H1 (cell line): ENCODE measurements at regions of chr6 and their contacts with region 1.

Region 1: DNA sequence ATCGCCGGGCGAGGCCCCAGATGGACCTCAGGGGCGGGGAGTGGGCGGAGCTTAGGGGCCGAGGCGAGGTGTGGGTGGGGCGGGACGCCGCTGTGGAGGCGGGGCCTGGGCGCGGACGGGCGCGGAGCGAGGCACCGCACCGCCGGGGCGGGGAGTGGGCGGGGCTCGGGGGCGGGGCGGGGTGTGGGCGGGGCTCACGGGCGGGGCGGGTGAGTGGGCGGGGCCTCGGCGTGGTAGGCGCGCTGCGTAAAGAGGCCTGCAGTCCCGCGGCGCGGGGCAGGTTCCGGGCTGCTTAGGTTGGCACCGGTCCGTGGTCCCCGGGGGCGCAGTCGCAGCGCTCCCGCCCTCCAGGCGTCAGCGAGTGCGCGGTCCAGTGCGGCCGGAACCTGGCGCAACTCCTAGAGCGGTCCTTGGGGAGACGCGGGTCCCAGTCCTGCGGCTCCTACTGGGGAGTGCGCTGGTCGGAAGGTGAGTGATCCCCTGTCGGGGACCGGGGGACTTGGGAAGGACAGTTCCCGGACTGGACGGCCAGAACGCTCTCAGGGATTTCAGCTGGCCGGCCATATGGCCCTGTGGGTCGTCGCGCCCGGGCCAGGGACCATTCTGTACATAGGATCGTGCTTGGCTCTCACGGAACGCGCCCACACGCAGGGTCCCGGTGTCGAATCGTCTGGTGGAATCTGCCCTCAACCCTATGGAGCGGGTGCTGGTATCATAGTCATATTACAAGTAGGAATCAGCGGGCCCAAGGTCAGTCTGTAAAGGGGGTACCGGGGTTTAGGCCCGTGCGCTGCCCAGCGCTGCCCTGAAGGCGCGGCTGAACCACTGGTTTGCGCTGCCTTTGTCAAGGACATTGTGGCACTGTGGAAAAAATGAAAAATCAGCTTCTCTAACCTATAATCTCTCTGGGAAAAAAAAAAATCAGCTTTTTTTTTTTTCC is at the start of gene NQO2:
- DNase-seq: peak in 1 of 2 experiments; percentile 96
- H3K4me3 ChIP-seq: peak within 1 kb of the TSS; percentile 75 to 91 (median 88)
- H3K27ac ChIP-seq: 0 out of 2 replicates have a peak within 1 kb of the TSS, but pooled peaks have one; percentile 51
- H3K4me1 ChIP-seq: peaks cover 0 to 9% (median 1%) of the 10 kb centered on the region in 4 experiments; a peak in 4 of 7 replicates
- H3K27me3 ChIP-seq: no peaks in the 10 kb centered on the region
- CTCF ChIP-seq: no peak
- EP300 ChIP-seq: no peak
- POLR2A ChIP-seq: peak; percentile 70 to 91
- RAD21 ChIP-seq: no peak
- total RNA-seq, gene NQO2: 126 and 135 TPM in 2 replicates

Region 2: GRCh38 chr6:2921520-2922115 is 78.3 kb before region 1 on chr6:
- CTCF ChIA-PET with region 1: no interaction called
- POLR2A ChIA-PET with region 1: no interaction called
- DNase-seq: peak in 1 of 2 experiments; percentile 37
- H3K4me3 ChIP-seq: no peak overlapping the region
- H3K27ac ChIP-seq: no peak overlapping the region
- H3K4me1 ChIP-seq: peaks cover 7 to 38% (median 25%) of the 10 kb centered on the region in 4 experiments
- H3K27me3 ChIP-seq: no peaks in the 10 kb centered on the region
- CTCF ChIP-seq: no peak
- EP300 ChIP-seq: no peak
- POLR2A ChIP-seq: no peak
- RAD21 ChIP-seq: no peak

Region 3: DNA sequence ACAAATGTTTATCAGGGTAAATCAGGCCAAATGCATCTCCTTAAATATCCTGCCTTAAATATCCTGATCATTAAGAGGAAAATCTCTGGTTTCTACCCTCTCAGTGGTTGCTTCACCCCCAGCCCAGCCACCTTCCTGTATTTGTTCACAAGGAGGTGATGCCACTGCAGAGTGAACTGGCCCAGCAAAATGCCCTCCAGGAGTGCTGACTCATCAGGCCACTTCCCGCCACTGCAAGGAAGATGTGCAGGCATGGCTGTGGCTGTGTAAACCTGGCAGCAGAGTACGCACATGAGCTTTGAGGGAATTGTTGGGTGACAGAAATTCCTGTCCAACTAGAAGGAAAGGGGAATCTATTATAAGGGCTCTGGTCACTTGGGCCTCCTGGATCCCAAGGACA is 13.6 kb after region 1 on chr6:
- CTCF ChIA-PET with region 1: interaction called, 6 read pairs
- POLR2A ChIA-PET with region 1: interaction called, 33 read pairs
- DNase-seq: no peak
- H3K4me3 ChIP-seq: no peak overlapping the region
- H3K27ac ChIP-seq: no peak overlapping the region
- H3K4me1 ChIP-seq: peaks cover 0 to 5% (median 4%) of the 10 kb centered on the region in 4 experiments; a peak in 3 of 7 replicates
- H3K27me3 ChIP-seq: no peaks in the 10 kb centered on the region
- CTCF ChIP-seq: no peak
- EP300 ChIP-seq: no peak
- POLR2A ChIP-seq: no peak
- RAD21 ChIP-seq: no peak

Region 4: DNA sequence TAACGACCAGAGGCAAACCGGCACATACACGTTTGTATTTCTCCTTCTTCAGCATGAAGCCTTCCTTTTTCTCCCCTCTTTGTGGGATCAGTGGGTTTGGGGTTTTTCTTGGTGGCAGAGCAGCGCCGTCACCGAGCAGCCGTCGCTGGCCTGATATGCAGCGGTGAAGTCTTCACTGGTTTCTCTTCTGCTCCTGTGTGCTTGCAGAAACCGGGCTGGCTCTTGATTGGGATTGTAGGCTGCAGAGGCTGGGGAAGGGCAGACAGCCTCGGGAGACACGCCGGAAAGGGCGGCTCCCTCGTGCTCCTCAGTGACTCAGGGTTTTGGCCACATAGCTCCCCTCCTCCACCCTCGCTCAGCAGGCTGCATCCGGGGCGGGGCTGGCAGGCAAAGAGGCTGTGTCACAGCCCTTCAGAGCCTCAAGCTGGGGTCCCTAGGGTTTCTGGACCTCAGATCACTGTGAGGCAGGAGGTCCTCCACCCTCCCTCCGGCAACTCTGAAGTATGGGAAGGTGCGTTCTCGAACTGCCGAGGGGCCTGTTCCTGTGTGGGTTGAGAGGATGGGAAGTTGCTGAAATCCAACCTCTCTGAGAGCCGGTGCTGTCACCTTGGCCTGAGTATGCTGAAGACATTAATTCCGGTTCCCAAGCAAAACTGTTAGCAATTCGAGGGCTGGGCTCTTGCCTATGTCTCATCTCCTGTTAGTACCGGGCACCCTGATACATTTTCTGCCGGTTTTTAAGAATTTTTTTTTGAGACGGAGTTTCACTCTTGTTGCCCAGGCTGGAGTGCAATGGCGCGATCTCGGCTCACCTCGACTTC is 24.0 kb after region 1 on chr6:
- CTCF ChIA-PET with region 1: interaction called, 13 read pairs
- POLR2A ChIA-PET with region 1: interaction called, 33 read pairs
- DNase-seq: peak; percentile 75 to 86
- H3K4me3 ChIP-seq: peak overlapping the region in 2 of 4 experiments; percentile 5 to 9; a peak in 1 of 8 replicates
- H3K27ac ChIP-seq: peak overlapping the region; percentile 29; the same call in 1 of the 2 replicates
- H3K4me1 ChIP-seq: peaks cover 6 to 17% (median 11%) of the 10 kb centered on the region in 4 experiments
- H3K27me3 ChIP-seq: no peaks in the 10 kb centered on the region
- CTCF ChIP-seq: no peak
- EP300 ChIP-seq: peak in 1 of 2 experiments; percentile 80; a peak in 1 of 3 replicates
- POLR2A ChIP-seq: no peak
- RAD21 ChIP-seq: no peak

Region 5: DNA sequence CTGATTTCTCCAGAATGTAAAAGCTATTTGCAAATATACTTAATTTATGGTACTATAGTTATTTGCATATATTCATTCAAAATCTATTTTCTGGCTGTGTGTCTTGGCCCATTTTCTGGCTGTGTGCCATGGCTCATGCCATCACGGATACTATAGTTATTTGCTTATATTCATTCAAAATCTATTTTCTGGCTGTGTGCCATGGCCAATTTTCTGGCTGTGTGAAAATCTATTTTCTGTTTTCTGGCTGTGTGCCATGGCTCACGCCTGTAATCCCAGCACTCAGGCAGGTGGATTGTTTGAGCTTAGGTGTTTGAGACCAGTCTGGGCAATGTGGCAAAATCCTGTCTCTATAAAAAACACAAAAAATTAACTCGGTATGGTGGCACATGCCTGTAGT is 39.5 kb after region 1 on chr6:
- CTCF ChIA-PET with region 1: interaction called, 20 read pairs
- POLR2A ChIA-PET with region 1: interaction called, 4 read pairs
- DNase-seq: no peak
- H3K4me3 ChIP-seq: no peak overlapping the region
- H3K27ac ChIP-seq: no peak overlapping the region
- H3K4me1 ChIP-seq: peaks cover 0 to 5% (median 1%) of the 10 kb centered on the region in 4 experiments; a peak in 1 of 7 replicates
- H3K27me3 ChIP-seq: no peaks in the 10 kb centered on the region
- CTCF ChIP-seq: no peak
- EP300 ChIP-seq: no peak
- POLR2A ChIP-seq: no peak
- RAD21 ChIP-seq: no peak

Region 6: DNA sequence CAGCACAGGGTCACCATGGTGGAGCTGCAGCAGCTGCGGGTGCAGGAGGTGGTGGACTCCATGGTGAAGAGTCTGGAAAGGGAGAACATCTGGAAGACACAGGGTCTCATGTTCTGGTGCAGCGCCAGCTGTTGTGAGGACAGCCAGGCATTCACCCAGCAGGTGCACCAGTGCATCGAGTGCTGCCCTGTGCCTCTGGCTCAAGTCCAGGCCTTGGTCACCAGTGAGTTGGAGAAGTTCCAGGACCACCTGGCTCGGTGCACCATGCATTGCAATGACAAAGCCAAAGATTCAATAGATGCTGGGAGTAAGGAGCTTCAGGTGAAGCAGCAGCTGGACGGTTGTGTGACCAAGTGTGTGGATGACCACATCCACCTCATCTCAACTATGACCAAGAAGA is 45.5 kb after region 1 on chr6:
- CTCF ChIA-PET with region 1: interaction called, 20 read pairs
- POLR2A ChIA-PET with region 1: interaction called, 5 read pairs
- DNase-seq: no peak
- H3K4me3 ChIP-seq: no peak overlapping the region
- H3K27ac ChIP-seq: no peak overlapping the region
- H3K4me1 ChIP-seq: peaks cover 0 to 5% (median 1%) of the 10 kb centered on the region in 4 experiments; a peak in 1 of 7 replicates
- H3K27me3 ChIP-seq: no peaks in the 10 kb centered on the region
- CTCF ChIP-seq: no peak
- EP300 ChIP-seq: no peak
- POLR2A ChIP-seq: no peak
- RAD21 ChIP-seq: no peak

Region 7: DNA sequence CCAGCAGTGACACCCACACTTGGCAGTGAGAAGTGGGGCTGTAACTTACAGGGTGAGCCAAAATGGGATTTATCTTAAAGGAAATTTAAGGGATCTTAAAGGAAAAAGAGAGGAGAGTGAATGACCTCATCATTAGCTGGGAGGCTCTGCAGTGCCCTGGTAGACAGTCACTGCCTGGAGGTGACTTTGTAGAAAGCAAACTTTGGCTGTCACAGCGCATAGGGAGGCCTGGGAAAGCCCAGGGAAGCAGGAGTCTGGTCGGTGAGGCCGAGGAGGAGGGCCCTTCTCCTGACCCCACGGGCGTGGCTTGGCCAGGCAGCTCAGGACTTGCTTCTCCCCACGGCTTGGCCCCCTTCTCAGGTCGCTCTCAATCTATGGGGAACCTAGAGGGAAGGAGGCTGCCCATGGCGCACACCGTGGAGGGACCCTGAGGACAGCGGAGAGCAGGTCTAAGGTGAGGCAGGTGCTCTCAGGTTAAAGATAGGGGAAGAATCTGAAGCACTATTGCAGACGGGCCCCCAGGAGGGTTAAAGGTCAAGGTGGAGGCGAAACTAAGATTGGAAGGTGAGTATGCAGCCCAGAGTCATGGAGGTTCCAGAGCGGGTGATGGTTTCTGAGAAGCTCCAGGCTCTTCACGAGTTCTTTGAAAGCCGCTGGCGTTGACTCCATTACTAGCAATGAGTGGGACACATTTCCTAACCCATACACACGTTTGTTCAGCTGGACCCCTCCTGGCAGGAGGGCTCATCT is 52.8 kb after region 1 on chr6:
- CTCF ChIA-PET with region 1: interaction called, 28 read pairs
- POLR2A ChIA-PET with region 1: interaction called, 10 read pairs
- DNase-seq: no peak
- H3K4me3 ChIP-seq: peak overlapping the region in 2 of 4 experiments; percentile 37 to 63; a peak in 4 of 8 replicates
- H3K27ac ChIP-seq: no peak overlapping the region
- H3K4me1 ChIP-seq: peaks cover 2 to 9% (median 5%) of the 10 kb centered on the region in 4 experiments; a peak in 6 of 7 replicates
- H3K27me3 ChIP-seq: peaks cover 0 to 6% (median 0%) of the 10 kb centered on the region in 4 experiments; a peak in 2 of 7 replicates
- CTCF ChIP-seq: no peak
- EP300 ChIP-seq: no peak
- POLR2A ChIP-seq: no peak
- RAD21 ChIP-seq: no peak

Region 8: DNA sequence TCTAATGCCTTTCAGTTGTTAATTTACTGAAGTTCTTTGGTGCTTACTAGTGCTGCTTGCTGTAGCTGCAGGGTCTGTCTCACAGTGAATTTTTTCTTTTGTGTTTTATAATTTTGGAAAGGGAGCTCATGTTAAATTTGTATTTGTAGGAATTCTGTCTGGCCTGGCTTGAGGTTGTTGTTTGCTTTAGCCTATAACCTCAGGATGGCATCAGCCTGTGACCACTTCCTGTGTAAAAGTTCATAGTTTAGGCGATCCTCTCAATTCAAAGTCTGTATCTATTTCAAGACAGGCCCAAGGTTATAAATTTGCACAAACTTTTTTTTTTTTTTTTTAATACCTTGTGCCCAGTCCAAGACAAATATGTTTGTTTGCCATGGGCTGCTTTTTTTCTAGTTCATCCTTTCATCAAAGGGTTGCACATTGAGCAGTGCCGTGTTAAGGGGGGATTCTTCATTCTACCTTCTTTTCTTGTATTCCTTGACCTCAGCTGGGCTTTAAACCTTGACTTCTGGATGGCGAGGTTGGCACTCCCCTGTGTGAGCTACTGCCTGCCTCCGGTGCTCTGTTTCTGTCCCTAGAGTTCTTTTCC is 75.7 kb after region 1 on chr6:
- CTCF ChIA-PET with region 1: interaction called, 11 read pairs
- POLR2A ChIA-PET with region 1: interaction called, 7 read pairs
- DNase-seq: no peak
- H3K4me3 ChIP-seq: peak overlapping the region in 1 of 4 experiments; percentile 33; a peak in 1 of 8 replicates
- H3K27ac ChIP-seq: peak overlapping the region; percentile 78; the same call in 1 of the 2 replicates
- H3K4me1 ChIP-seq: peaks cover 5 to 28% (median 13%) of the 10 kb centered on the region in 4 experiments; a peak in 6 of 7 replicates
- H3K27me3 ChIP-seq: no peaks in the 10 kb centered on the region
- CTCF ChIP-seq: no peak
- EP300 ChIP-seq: no peak
- POLR2A ChIP-seq: no peak
- RAD21 ChIP-seq: no peak

Region 9: GRCh38 chr6:3372007-3372846 is 372.3 kb after region 1 on chr6:
- CTCF ChIA-PET with region 1: no interaction called
- POLR2A ChIA-PET with region 1: no interaction called
- DNase-seq: no peak
- H3K4me3 ChIP-seq: no peak overlapping the region
- H3K27ac ChIP-seq: no peak overlapping the region
- H3K4me1 ChIP-seq: peaks cover 0 to 5% (median 3%) of the 10 kb centered on the region in 4 experiments; a peak in 4 of 7 replicates
- H3K27me3 ChIP-seq: peaks cover 0 to 2% (median 0%) of the 10 kb centered on the region in 4 experiments; a peak in 1 of 7 replicates
- CTCF ChIP-seq: peak; percentile 31 to 67 (median 60)
- EP300 ChIP-seq: no peak
- POLR2A ChIP-seq: no peak
- RAD21 ChIP-seq: peak; percentile 46 to 49